ENCODE measurements at regions of chr13 and their contacts with region 1.

Region 1: DNA sequence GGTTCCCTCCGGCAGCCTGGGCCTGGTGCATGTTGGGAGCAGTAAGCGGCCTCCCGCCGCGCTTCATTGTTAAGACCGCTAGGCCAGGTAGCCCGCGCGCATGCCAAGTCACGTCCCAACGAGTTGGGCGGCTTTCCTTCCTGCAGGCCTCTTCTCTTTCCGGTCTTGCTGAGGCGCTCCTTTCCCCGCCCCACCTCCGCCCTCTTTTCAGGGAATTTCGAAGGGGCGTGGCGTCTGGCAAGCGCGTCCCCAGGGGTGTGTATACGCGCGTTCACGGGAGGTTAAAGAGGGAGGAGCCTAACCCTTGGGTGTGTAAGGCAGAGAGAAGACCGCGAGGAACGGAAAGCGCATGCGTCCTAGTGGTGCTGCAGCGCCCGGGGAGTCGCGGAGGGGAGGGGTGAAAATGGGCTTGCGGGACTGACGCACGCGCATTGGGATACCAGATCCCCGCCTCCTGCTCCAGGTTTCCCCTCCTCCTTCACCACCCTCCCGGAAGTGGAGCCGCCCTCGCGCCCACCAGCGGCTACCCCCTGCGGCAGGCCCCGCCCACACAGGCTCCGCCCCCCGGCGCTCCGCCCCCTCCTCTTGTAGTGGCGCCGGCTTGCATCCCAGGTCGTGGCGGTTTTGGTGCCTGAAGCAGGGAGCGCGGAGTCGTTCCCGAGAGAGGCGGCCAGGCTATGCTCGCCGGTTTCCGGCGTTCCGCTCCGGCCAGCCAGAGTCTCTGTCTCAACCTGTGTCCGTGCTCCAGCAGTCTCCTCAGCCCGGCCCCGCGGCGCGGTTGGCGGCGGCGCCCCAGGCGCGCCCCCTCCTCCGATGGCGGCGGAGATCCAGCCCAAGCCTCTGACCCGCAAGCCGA is at the start of gene WDFY2:
- DNase-seq: peak; percentile 100
- ATAC-seq: peak; percentile 95
- H3K4me3 ChIP-seq: peak within 1 kb of the TSS; percentile 97 to 99
- H3K27ac ChIP-seq: peak within 1 kb of the TSS; percentile 92 to 93
- H3K4me1 ChIP-seq: peaks cover 10 to 42% of the 10 kb centered on the region in 2 donors
- H3K27me3 ChIP-seq: no peaks in the 10 kb centered on the region
- CTCF ChIP-seq: peak in 1 of 2 donors; percentile 46
- polyA plus RNA-seq, gene WDFY2: 20.9 to 33.3 (median 25.1) TPM

Region 2: GRCh38 chr13:51452361-51453206 is 131.5 kb before region 1 on chr13 and contains the start of gene INTS6:
- intact Hi-C with region 1: loop called in 1 of 2 experiments (anchors 10 kb)
- DNase-seq: peak; percentile 54 to 100 (median 100)
- ATAC-seq: peak; percentile 91
- H3K4me3 ChIP-seq: peak within 1 kb of the TSS; percentile 85 to 92
- H3K27ac ChIP-seq: peak within 1 kb of the TSS; percentile 99
- H3K4me1 ChIP-seq: peaks cover 7 to 54% of the 10 kb centered on the region in 2 donors
- H3K27me3 ChIP-seq: no peaks in the 10 kb centered on the region
- CTCF ChIP-seq: no peak
- polyA plus RNA-seq, gene INTS6: 40.2 to 47.3 (median 42.8) TPM

Region 3: DNA sequence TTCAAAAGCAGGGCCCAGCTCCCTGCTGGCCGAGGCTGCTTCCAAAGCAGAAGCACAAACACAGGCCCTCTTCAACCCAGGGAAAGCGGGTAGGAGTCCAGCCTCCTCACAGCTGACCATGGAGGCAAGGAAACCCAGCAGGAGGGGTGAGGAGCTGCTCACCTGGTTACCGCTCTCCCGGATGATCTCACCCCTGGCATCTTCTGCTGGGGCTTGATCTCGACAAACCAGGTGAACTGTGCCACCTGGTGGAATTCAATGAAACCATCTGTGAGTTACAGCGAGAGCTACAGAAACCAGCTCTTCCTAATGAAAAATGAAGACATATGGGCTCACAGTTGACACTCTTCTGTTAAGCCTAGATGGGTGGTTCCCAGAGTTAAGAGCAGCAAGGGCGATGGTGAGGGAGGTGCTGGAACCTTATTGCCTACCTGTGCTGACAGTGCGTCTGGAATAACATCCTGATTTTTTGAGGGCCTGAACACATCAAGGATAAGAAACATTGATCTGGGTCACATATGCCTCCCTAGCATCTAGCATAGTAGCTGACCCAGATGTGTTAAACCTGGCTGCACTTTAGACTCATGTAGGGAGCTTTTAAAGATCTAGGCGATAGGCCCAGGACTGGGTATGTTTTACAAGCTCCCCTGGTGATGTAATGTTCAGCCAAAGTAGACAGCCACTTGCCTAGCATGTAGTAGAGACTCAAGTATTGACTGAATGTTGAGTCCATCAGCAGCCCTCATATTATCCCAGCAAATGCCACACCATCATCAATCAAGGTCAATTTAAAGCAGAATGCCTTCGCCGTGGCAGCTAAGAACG is 213.8 kb after region 1 on chr13:
- intact Hi-C with region 1: loop called in 1 of 2 experiments (anchors 10 kb)
- DNase-seq: peak in 1 of 4 donors; percentile 72
- ATAC-seq: peak; percentile 66
- H3K4me3 ChIP-seq: no peak overlapping the region
- H3K27ac ChIP-seq: no peak overlapping the region
- H3K4me1 ChIP-seq: peaks cover 6 to 29% of the 10 kb centered on the region in 2 donors
- H3K27me3 ChIP-seq: no peaks in the 10 kb centered on the region
- CTCF ChIP-seq: peak; percentile 23 to 24